PC-9 (cell line): ENCODE measurements at regions of chrX and their contacts with region 1.

Region 1: DNA sequence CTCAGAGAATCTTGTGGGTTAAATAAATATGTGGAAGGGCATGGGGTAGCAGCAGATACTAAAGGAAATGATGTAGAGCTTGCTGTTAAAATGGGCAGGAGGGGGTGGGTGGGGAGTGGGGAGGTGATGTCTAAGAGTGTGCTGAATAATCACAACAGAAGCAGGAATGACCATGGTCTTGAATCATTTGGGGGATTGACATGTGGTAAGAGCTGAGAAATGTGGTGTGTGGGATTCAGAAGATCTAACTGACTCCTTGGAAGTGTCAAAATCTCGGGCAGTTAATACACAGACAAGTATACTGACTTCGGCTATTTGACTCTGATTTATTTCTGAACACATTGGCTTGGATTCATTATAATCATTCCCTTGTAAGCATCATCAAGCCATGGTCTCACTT is 6.8 kb downstream of the VGLL1 start:
- DNase-seq: no peak
- H3K4me3 ChIP-seq: no peak overlapping the region
- H3K27ac ChIP-seq: no peak overlapping the region
- H3K4me1 ChIP-seq: peaks cover 14% of the 10 kb centered on the region
- H3K27me3 ChIP-seq: no peaks in the 10 kb centered on the region
- CTCF ChIP-seq: no peak

Region 2: DNA sequence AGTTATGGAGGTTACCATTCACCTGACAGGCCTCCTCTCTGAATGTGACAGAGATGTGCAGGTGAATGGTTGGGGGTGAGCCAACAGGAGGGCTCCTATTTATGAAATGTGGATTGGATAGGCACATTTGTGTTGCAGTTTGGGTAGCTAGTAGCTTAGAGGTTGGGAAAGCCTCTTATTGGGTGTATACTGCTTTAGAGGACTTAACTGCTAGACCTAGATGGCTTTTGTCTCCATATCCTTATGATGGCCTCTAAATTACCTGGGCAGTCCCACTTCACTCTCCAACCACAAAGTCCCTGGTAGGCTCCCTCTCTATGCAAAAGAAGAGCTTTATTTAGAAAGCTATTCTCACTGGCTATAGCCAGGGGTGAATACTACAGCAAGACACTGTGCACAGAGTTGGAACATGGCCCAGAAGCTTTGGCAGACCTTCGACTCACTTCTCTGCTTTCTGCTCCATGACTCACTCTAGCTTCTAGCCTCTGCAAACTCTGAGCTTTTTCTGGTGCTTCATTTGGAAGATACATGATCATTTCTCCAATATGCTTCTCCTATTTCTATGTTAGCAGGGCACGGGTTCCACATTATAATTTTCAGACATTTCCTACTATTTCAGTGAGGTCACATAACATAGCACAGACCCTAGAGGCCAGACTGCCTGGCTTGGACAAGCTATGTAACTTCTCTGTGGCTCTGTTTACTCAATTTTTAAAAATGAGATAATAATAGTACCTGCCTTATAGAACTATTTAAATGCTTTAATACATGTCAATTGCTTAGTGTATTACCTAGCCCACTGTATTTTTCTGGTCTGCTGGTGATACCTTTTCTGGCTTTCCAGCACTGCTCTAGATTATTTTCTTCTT is 12.8 kb before region 1 on chrX:
- CTCF ChIA-PET with region 1: no interaction called
- POLR2A ChIA-PET with region 1: interaction called, 15 read pairs
- intact Hi-C with region 1: no loop called
- DNase-seq: peak; percentile 80 to 96
- H3K4me3 ChIP-seq: peak overlapping the region; percentile 36; the same call in 1 of the 2 replicates
- H3K27ac ChIP-seq: peak overlapping the region; percentile 86
- H3K4me1 ChIP-seq: peaks cover 64% of the 10 kb centered on the region
- H3K27me3 ChIP-seq: no peaks in the 10 kb centered on the region
- CTCF ChIP-seq: no peak